AG04450 (cell line): ENCODE measurements at regions of chr19 and their contacts with region 1.

Region 1: DNA sequence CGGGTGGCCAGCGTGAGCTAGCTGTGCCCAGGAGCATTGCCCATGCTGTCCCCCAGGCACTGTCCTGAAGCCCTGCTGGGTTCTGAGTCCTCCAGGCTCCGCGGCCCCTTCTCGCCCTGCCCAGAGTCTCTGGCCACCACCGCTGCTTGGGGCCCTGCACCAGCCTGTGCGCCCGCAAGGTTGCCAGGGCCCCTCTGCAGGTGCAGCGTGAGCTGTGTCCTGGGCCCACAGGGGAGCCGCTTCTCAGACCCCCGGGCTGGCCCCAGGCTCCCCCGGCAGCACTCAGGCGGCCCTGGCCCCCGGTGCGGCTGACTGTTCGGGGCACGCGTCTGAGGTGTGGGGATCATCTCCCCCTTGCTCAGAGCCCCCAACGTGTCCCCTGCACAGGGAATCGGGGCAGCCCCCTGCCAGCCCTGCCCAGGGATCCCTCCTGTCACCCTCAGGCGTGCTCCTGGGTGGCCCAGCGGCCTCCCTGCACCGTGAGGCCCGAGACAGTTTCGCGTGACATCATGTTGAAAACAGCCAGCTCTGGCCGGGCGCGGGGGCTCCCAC is 4.1 kb downstream of the CSNK1G2 start:
- DNase-seq: no peak
- H3K4me3 ChIP-seq: no peak overlapping the region
- H3K27ac ChIP-seq: no peak overlapping the region
- H3K27me3 ChIP-seq: no peaks in the 10 kb centered on the region
- CTCF ChIP-seq: no peak

Region 2: DNA sequence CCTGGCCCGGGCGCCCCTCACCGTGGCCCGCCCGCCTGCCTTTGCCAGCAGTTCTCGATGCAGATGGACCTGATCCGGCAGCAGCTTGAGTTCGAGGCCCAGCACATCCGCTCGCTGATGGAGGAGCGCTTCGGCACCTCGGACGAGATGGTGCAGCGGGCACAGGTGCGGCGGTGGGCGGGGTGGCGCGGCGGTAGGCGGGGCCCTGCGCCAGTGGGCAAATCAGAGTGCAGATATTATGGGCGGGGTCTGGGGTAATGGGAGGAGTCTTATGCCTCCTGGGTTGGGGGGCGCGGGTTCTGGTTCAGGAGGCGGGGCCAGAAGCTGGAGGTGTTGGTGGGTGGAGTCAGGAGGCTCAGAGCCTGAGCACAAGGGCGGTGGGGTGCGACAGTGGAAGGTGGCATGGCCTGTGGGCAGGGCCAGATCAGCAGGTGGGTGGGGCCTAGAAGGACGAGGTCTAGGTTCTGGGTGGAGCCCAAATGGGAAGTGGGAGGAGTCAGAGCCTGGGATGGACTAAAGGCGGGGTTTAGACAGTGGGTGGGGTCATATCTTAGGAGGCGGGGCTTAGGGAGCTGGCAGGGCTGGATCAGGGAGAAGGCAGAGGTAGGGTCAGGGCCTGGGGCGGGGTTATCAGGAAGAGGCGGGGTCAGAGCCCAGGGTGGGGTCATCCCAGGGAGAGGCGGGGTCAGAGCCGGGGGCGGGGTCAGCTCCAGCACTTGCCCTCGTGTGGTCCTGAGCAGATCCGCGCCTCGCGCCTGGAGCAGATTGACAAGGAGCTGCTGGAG is 489.6 kb before region 1 on chr19:
- CTCF ChIA-PET with region 1: no interaction called
- POLR2A ChIA-PET with region 1: no interaction called
- DNase-seq: no peak
- H3K4me3 ChIP-seq: no peak overlapping the region
- H3K27ac ChIP-seq: no peak overlapping the region
- H3K27me3 ChIP-seq: peaks cover 59% of the 10 kb centered on the region
- CTCF ChIP-seq: no peak

Region 3: GRCh38 chr19:1955171-1956112 is 10.4 kb after region 1 on chr19:
- CTCF ChIA-PET with region 1: interaction called, 10 read pairs
- POLR2A ChIA-PET with region 1: no interaction called
- DNase-seq: no peak
- H3K4me3 ChIP-seq: no peak overlapping the region
- H3K27ac ChIP-seq: no peak overlapping the region
- H3K27me3 ChIP-seq: no peaks in the 10 kb centered on the region
- CTCF ChIP-seq: no peak